Left ventricle myocardium superior (tissue), 1 donor: ENCODE measurements at regions of chr3 and their contacts with region 1.

Region 1: GRCh38 chr3:62188681-62189383 is 184.5 kb downstream of the FEZF2 start:
- DNase-seq: peak; percentile 81
- ATAC-seq: peak; percentile 72

Region 2: GRCh38 chr3:61483997-61484396 is 704.8 kb before region 1 on chr3:
- intact Hi-C with region 1: no loop called
- DNase-seq: no peak
- ATAC-seq: no peak

Region 3: DNA sequence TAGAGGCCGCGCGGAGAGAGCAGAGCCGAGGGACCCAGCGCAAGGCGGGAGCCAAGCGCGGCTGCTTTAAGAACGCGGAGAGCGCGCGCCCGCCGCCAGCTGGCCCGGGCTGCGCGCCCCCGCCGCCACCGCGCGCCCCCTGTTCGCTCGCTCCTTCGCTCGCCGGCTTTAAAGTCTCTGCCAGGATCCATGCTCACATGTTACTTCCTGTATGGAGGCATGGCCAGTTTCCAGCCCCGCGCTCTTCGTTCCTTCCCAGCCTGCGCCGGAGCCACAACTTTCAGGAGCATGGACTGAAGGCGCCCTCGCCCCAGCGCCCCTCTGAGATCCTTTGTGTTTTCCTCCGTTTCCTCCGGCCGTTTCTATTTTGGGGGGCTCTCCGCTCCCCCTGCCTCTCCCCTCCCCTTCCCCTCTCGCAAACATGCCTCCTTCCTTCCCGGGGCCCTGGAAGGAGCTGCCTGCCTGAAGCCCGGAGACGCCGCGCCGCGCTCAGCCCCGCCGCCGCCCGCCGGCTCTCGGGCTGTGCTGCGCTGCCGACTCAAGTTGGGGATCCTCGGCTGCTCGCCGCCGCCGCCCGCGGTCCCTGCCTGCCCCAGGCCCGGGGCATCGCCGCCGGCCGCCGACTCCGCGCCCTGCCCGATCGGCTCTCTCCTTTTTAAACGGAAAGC is 627.3 kb before region 1 on chr3 and contains the start of gene PTPRG:
- intact Hi-C with region 1: loop called (anchors 5 kb)
- DNase-seq: peak; percentile 94
- ATAC-seq: peak; percentile 80
- total RNA-seq, gene PTPRG: 30.4 TPM